Activated CD4-positive, alpha-beta memory T cell treated with anti-CD3 and anti-CD28 coated beads for 36 hours (primary cell): ENCODE measurements at regions of chr11 and their contacts with region 1.

Region 1: DNA sequence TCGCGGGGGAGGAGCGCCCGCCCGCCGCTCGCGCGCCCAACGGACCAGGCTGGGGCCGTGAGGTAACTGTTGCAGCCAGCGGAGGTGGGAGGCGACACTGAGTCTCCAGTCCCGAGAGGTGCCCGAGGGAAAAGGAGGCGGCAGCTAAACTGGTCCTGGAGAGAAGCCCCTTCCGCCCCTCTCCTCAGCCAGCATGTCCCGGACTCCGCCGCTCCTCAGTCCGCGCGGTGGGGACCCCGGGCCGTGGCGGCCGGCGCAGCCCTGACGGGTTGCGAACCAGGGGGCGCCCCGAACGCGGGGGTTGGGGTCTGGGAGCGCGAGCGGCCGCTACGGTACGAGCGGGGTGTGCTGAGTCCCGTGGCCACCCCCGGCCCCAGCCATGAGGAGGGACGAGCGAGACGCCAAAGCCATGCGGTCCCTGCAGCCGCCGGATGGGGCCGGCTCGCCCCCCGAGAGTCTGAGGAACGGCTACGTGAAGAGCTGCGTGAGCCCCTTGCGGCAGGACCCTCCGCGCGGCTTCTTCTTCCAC is at the start of gene PDE3B:
- DNase-seq: peak; percentile 87
- H3K4me3 Mint-ChIP-seq: peak within 1 kb of the TSS; percentile 71
- H3K27ac Mint-ChIP-seq: peak within 1 kb of the TSS; percentile 89
- H3K4me1 Mint-ChIP-seq: peaks cover 49% of the 10 kb centered on the region
- H3K27me3 Mint-ChIP-seq: no peaks in the 10 kb centered on the region
- total RNA-seq, gene PDE3B: 21.6 to 21.8 TPM

Region 2: GRCh38 chr11:14300661-14301304 is 343.0 kb before region 1 on chr11:
- CTCF ChIA-PET with region 1: no interaction called
- POLR2A ChIA-PET with region 1: no interaction called
- intact Hi-C with region 1: no loop called
- DNase-seq: peak; percentile 66
- H3K4me3 Mint-ChIP-seq: no peak overlapping the region
- H3K27ac Mint-ChIP-seq: no peak overlapping the region
- H3K4me1 Mint-ChIP-seq: peaks cover 2% of the 10 kb centered on the region
- H3K27me3 Mint-ChIP-seq: no peaks in the 10 kb centered on the region

Region 3: GRCh38 chr11:14537134-14537599 is 106.6 kb before region 1 on chr11:
- CTCF ChIA-PET with region 1: interaction called, 7 read pairs
- POLR2A ChIA-PET with region 1: interaction called, 11 read pairs
- intact Hi-C with region 1: loop called (anchors 1 kb)
- DNase-seq: peak; percentile 42
- H3K4me3 Mint-ChIP-seq: peak overlapping the region; percentile 51
- H3K27ac Mint-ChIP-seq: peak overlapping the region; percentile 76
- H3K4me1 Mint-ChIP-seq: peaks cover 19% of the 10 kb centered on the region
- H3K27me3 Mint-ChIP-seq: no peaks in the 10 kb centered on the region

Region 4: DNA sequence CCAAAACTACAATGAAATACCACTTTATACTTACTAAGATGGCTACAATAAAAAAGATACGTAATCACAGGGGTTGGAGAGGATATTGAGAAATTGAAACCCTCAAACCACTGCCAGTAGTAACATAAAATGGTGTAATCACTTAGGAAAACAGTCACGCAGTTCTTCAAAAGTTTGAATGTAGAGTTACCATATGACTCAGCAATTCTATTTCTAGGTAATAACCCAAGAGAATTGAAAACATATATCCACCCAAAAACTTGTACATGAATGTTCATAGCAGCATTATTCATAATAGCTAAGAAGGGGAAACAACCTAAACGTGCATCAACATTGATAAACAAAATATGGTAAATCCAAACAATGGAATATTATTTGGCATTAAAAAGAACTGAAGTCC is 99.2 kb before region 1 on chr11:
- CTCF ChIA-PET with region 1: interaction called, 10 read pairs
- POLR2A ChIA-PET with region 1: interaction called, 13 read pairs
- intact Hi-C with region 1: loop called (anchors 1 kb)
- DNase-seq: no peak
- H3K4me3 Mint-ChIP-seq: no peak overlapping the region
- H3K27ac Mint-ChIP-seq: peak overlapping the region; percentile 82
- H3K4me1 Mint-ChIP-seq: peaks cover 39% of the 10 kb centered on the region
- H3K27me3 Mint-ChIP-seq: no peaks in the 10 kb centered on the region

Region 5: GRCh38 chr11:14611939-14612338 is 31.8 kb before region 1 on chr11:
- CTCF ChIA-PET with region 1: no interaction called
- POLR2A ChIA-PET with region 1: no interaction called
- intact Hi-C with region 1: no loop called
- DNase-seq: peak; percentile 46
- H3K4me3 Mint-ChIP-seq: no peak overlapping the region
- H3K27ac Mint-ChIP-seq: no peak overlapping the region
- H3K4me1 Mint-ChIP-seq: peaks cover 23% of the 10 kb centered on the region
- H3K27me3 Mint-ChIP-seq: no peaks in the 10 kb centered on the region

Region 6: DNA sequence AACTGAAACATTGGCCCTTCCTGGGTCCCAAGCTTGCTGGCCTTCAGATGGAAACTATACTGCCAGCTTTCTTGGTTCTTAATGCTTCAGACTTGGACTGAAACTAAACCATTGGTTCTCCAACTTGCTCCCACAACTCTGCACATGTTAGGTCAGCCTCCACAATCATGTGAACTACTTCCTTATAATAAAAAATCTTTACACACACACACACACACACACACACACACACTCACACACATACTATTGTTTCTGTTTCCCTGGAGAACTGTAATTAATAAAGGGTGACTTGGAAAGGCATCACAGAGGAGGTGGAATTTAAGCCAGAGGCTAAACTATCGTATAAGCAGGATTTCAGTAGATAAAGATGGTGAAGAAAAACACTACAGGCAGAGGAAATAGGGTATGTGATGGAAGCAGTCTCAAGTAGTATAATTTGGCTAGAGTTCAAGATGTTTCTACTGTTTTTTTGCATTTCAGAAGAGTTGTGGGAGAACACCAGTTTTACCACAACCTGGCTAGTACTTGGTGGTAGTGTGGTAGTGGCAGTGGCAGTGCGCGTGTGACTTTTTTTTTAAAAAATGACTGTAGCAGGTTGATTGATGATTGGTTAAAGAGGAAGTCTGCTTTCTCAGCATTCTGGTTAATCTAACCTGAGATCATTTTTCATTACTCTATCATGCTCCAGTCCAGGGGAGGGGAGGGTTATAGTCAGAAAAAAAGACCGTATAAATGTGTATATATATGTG is 69.9 kb after region 1 on chr11:
- CTCF ChIA-PET with region 1: no interaction called
- POLR2A ChIA-PET with region 1: no interaction called
- intact Hi-C with region 1: loop called (anchors 5 kb)
- DNase-seq: peak; percentile 40
- H3K4me3 Mint-ChIP-seq: peak overlapping the region; percentile 2
- H3K27ac Mint-ChIP-seq: peak overlapping the region; percentile 61
- H3K4me1 Mint-ChIP-seq: peaks cover 38% of the 10 kb centered on the region
- H3K27me3 Mint-ChIP-seq: no peaks in the 10 kb centered on the region